HEK293T (cell line): ENCODE measurements at regions of chr15 and their contacts with region 1.

Region 1: DNA sequence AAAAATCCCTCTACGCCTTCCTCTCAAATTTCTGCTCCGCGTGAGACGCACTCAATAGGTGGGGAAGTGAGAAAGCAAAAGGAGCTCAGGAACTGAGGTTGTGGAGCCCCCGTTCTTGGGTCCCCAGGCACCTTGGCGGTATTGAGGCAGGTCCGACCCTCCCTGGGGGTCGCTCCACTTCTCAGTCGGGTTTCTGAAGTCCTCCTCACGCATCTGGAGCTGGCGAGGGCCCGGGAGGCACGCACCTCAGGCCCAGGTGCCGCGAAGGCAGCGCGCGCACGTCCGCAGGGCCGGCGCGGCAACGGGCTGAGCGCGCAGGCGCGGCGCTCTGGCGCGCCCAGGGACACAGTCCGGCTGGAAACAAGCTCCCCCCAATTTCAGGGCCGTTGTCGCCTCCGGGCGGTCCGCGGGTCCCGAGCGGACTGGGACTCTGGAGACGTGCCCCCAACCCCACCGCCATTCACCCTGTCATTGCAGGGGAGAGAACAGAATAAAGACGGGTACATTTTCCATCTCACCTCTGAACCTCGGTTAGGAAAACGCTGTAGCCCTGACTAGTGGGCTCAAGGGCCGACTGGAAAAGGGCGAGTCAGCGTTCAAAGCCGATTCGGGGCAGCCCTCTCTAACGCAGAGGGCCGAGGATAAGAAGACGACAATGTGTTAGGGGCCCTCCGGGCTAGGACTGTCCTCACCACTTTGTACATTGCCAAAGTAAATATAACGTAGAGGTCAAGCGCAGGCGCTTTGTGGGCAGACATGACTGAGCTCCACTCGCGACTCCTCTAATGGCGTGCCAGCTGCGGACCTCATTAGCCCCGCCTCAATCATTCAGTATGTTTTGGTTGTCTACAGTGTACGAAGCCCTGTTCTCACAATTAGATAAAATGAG is at the start of gene ZNF770:
- DNase-seq: peak; percentile 70

Region 2: DNA sequence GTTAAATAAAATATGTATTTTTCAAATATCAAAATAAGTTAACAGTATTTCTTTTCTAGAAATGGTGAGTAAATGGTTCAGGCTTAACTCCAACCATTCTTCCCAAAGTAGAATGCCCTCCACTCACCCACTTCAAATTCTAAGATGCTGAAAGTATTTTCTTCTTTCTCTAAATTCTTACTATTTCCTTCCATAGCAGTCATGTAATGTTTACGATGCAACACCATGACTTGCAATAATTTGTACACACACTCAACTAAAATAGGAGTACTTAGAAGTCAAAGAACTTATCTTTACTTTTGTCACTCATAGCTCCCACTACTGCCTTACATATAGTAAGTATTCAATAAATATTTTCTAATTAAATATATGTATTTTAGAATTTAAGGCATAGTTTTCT is 83.7 kb before region 1 on chr15:
- CTCF ChIA-PET with region 1: no interaction called
- POLR2A ChIA-PET with region 1: no interaction called
- DNase-seq: no peak

Region 3: DNA sequence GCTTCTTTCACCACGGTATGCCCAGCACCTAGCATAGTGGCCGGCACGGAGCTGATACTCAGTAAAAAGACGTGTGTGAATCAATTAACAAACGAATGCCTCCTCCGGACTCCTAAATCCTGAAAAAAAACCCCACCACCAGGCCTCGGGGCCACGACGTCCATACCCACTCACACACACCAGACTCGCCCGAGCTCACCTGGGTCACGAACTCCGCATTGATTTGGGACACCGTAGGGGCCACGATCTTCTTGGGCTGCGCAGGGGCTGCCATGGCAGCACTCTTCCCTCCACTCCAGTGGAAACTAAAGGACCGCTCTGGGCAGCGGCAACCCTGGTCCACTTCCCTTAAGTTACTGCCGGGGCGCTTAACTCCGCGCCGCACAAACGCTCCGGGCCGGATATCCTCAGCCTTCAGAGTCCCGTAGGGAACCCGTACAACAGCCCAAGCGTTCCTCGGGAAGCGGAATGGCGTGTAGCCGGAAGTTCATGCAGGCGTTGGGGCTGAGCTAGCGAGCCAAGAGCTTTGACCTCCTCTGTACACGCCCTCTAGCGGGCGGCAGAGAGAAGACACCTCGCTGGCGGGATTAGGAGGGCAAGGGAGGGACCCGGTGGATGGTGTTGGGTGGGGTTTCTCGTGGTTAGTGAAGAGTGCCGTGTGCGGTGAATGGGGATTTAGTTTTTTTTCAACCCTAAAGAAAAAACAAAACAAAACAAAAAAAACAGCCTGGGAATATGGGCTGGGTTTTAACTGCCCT is 18.7 kb before region 1 on chr15 and contains the start of gene AQR:
- CTCF ChIA-PET with region 1: no interaction called
- POLR2A ChIA-PET with region 1: interaction called, 75 read pairs
- DNase-seq: peak; percentile 78

Region 4: GRCh38 chr15:35000511-35000910 is 12.3 kb after region 1 on chr15:
- CTCF ChIA-PET with region 1: no interaction called
- POLR2A ChIA-PET with region 1: interaction called, 18 read pairs
- DNase-seq: no peak

Region 5: DNA sequence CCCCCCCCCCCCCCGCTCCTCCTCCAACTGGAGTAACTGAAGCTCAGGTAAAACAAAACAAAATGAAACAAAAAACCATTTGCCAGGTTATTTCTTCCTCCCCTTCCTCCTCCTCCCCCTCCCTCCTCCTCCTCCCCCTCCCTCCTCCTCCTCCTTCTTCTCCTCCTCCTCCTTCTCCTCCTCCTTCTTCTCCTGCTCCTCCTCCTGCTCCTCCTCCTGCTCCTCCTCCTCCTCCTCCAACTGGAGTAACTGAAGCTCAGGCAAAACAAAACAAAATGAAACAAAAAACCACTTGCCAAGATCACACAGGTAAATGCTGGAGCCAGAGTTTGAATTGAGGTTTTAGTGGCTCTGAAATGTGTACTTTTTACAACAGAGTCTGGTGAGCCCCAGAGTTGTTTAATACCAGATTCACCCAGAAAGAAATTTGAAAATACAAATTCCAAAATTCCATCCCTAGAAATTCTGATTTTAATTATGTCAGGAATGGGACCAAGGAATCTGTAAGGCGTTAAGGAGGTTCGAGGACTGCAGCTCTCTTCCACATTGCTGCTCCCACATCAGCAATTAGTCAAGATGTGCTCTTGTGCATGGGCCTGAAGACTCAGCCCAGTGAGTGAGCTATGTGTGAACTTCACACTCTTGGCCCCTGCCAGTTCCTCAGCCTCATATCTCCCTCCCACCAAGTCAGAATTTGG is 31.3 kb after region 1 on chr15:
- CTCF ChIA-PET with region 1: interaction called, 6 read pairs
- POLR2A ChIA-PET with region 1: interaction called, 11 read pairs
- DNase-seq: no peak